ENCODE measurements at regions of chr1 and their contacts with region 1.

Region 1: DNA sequence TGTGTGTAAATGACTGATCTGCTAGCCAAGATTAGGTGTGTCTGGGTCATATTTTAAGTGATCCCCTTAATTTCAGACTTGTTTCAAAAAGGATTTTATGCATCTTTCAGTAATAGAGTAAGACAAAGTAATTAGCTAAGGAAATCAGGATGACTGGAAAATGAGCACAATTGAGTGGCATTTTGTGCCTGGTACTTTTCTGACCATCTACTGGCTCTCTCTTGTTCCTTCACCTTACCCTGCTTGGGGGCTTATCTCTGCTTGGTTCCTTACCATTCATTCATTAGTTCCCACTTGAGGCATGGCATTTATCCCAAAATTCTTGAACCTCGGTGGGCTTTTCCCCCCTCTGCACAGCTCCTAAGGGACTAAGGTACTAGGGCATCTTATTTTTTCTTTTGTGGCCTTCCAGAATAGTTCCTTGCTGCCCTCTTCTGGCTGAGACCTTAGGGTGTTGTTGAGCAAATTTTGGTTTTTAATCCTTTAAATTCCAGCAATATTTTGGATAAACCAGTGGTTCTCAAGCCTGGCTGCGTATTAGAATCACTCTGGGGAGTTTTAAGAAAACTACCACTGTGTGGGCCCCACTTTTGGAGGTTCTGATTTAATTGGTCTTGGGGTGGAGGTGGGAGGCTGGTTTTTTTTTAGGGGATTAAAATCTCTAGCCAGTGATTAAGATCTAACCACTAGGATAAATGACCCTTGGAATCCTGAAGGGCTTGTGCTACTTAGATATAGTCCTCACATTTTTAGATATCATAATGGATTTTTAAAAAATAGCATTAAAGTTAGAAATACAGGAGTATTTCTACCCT is 50.8 kb downstream of the HS2ST1 start:
- DNase-seq: no peak
- ATAC-seq: peak in 2 of 4 donors; percentile 22 to 45
- H3K4me3 ChIP-seq: no peak overlapping the region
- H3K27ac ChIP-seq: no peak overlapping the region
- H3K4me1 ChIP-seq: peaks cover 0 to 5% (median 0%) of the 10 kb centered on the region in 12 donors
- H3K27me3 ChIP-seq: no peaks in the 10 kb centered on the region
- CTCF ChIP-seq: peak; percentile 44 to 76 (median 64)
- POLR2A ChIP-seq: no peak

Region 2: DNA sequence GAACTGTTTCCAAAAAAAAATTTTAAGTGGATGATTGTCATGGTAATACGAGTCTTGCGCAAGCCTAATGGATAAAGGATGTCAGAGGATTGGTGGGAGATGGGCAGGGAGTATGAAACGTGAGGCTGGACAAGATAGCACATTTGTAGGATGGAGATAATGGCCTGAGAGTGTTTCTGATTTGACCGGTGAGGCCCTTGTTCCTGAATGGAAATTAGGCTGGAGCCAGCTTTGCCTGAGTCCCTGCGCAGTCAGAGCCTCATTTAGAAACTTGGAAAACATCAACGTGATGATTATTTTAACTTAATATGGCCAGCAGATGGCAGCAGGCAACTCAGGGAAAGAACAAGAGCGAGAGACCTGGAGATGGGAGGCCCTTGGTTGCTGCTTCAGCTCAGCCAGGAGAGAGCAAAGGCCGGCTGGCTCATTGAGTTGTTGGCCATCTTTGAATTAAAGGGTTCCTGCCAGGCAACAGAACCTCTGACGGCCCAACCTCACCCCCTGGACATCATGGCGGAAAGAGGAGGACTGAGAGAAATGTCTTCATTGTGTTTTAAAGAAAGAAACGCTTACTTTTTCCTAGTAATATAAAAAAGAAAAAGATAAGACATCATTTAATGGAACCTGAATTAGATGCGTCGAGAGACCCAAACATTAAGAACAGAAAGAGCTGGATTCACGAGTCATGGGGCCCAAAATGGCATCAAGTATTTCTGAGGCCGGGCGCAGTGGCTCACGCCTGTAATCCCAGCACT is 131.6 kb before region 1 on chr1:
- intact Hi-C with region 1: loop called in 9 of 10 experiments (anchors 1 to 5 kb)
- DNase-seq: peak; percentile 62 to 77 (median 64)
- ATAC-seq: peak; percentile 65 to 93 (median 88)
- H3K4me3 ChIP-seq: no peak overlapping the region
- H3K27ac ChIP-seq: no peak overlapping the region
- H3K4me1 ChIP-seq: peaks cover 0 to 8% (median 0%) of the 10 kb centered on the region in 12 donors
- H3K27me3 ChIP-seq: no peaks in the 10 kb centered on the region
- CTCF ChIP-seq: peak; percentile 51 to 75 (median 62)
- POLR2A ChIP-seq: no peak

Region 3: DNA sequence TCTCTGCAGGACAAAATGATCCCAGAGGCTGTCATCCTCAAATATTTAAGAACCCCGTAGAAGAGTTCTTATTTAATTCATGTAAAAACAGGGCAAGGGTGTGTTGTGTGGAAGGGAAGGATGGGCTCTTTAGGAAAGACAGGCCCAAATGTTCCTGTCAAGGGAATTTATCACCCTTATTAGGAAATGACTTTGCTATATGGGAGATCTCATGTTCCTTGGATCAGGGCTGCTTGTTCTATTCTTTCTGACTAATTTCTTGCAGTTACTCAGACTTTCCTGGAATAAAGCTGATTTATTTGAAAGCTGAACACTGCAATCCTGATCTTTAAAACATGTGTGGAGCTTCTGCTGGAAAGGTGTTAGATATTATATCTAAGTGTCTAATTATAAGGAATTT is 124.1 kb before region 1 on chr1:
- intact Hi-C with region 1: loop called in 2 of 10 experiments (anchors 5 kb)
- DNase-seq: no peak
- ATAC-seq: no peak
- H3K4me3 ChIP-seq: no peak overlapping the region
- H3K27ac ChIP-seq: no peak overlapping the region
- H3K4me1 ChIP-seq: peaks cover 0 to 4% (median 0%) of the 10 kb centered on the region in 12 donors
- H3K27me3 ChIP-seq: no peaks in the 10 kb centered on the region
- CTCF ChIP-seq: no peak
- POLR2A ChIP-seq: no peak

Region 4: DNA sequence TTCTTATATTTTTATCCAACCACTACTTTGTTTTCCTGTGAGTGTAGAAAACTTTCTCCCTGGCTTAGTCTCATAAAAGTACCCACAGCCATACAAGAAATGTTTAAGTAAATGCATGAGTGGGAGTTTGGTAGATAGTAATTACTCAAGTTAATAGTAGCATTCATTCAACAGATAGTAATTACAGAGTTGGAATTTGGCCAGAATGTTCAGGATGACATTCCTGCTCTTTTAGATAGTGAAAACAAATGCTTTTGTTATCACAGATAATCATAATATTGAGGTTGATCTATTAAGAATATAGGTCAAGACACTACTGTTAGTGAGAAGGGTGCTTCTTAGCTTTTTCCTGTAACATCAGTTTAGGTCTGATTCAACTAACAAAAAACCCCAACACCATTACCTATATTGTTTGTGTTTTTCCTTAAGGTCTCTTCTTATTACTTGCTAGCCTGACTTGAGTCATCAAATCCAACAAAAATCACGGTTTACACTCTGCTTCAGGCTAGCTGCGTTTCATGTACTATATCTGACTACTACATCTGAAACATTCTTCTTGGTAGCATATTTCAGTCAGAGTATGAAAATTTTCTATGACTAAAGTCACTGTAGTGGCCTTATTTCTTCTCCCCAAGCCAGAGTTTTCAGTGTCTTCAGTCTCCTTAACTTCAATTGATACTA is 112.9 kb after region 1 on chr1:
- intact Hi-C with region 1: loop called in 3 of 10 experiments (anchors 5 kb)
- DNase-seq: no peak
- ATAC-seq: no peak
- H3K4me3 ChIP-seq: no peak overlapping the region
- H3K27ac ChIP-seq: no peak overlapping the region
- H3K4me1 ChIP-seq: peaks cover 0 to 14% (median 1%) of the 10 kb centered on the region in 12 donors
- H3K27me3 ChIP-seq: no peaks in the 10 kb centered on the region
- CTCF ChIP-seq: no peak
- POLR2A ChIP-seq: no peak

Region 5: DNA sequence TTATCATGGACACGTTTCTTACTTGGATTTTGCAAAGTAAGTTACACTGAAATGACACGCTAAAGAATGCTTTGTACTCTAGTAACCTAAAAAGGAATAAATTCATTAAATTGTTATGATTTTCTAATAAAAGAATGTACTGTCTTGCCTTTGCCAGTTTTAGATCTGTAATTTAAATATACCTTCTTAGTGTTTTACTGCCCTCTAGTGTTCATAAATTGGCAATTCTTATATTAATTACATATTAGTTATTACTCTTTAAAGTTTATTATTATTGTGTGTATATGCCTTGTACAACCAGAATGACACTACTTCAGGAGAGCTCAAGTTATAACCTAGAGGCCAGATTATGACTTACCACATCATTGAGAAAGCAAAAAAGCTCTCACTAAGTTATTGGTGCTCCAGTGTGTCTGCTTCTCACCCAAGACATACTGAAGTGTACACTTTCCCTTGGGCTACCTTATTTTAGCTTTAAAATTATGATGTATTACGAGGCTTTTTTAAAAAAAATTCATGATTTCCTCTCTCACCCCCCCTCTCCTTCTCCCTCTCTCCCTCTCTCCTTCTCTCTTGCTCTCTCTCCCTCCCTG is 119.1 kb after region 1 on chr1:
- intact Hi-C with region 1: loop called in 3 of 10 experiments (anchors 5 kb)
- DNase-seq: no peak
- ATAC-seq: peak in 1 of 4 donors; percentile 42
- H3K4me3 ChIP-seq: no peak overlapping the region
- H3K27ac ChIP-seq: no peak overlapping the region
- H3K4me1 ChIP-seq: peaks cover 0 to 8% (median 4%) of the 10 kb centered on the region in 12 donors
- H3K27me3 ChIP-seq: no peaks in the 10 kb centered on the region
- CTCF ChIP-seq: peak; percentile 57 to 85 (median 72)
- POLR2A ChIP-seq: no peak